Psoas muscle (tissue), 8 donors: ENCODE measurements at regions of chr14 and their contacts with region 1.

Region 1: GRCh38 chr14:30982533-30982932 is 42.9 kb upstream of the AP4S1 start:
- DNase-seq: no peak
- ATAC-seq: no peak
- H3K4me3 ChIP-seq: no peak overlapping the region
- H3K27ac ChIP-seq: peak overlapping the region; percentile 15
- H3K4me1 ChIP-seq: peaks cover 14% of the 10 kb centered on the region
- H3K27me3 ChIP-seq: no peaks in the 10 kb centered on the region
- CTCF ChIP-seq: no peak

Region 2: DNA sequence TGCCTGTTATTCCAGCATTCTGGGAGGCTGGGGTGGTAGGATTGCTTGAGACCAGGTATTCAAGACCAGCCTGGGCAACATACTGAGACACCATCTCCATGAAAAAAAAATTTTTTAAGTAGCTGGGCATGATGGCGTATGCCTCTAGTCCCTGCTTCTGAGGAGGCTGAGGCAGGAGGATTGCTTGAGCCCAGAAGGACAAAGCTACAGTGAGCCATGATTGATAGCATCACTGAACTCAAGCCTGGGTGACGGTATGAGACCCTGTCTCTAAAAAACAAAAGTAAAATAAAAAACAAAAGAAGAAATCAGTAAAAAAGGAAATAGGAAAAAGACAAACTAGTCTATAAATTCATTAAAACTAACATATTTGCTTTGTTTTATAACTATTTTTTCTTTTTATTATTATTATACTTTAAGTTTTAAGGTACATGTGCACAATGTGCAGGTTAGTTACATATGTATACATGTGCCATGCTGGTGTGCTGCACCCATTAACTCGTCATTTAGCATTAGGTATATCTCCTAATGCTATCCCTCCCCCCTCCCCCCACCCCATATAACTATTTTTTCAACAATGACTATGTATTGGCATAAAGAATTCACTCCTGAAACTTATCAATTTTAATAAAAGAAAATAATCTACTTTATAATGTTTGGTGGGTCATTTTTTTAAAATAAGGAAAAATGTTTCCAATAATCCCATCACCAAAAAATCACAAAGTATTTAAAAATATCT is 27.5 kb after region 1 on chr14:
- intact Hi-C with region 1: no loop called
- DNase-seq: no peak
- ATAC-seq: no peak
- H3K4me3 ChIP-seq: no peak overlapping the region
- H3K27ac ChIP-seq: no peak overlapping the region
- H3K4me1 ChIP-seq: peaks cover 21% of the 10 kb centered on the region
- H3K27me3 ChIP-seq: no peaks in the 10 kb centered on the region
- CTCF ChIP-seq: no peak

Region 3: DNA sequence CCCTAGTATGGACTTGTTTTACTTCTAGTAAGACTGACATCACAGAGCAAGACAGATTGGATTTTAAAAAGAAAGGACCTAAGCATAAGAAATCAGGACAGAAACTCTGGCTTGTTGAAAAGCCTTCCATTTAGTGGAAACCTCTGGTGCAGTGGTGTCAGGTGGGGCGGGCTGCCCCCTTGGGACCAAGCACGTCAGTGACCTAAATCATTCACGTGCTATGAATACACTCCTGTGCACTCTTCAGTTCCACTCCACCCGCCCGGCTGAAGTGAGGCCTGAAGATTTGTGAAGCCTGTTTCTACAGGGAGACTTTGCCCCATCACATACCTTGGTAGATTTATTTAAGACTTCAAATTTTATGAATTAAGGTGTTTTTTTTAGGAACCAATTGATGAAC is 101.9 kb after region 1 on chr14:
- intact Hi-C with region 1: loop called (anchors 2 to 5 kb)
- DNase-seq: peak in 1 of 2 donors; percentile 70
- ATAC-seq: peak in 3 of 4 donors; percentile 40 to 76 (median 59)
- H3K4me3 ChIP-seq: no peak overlapping the region
- H3K27ac ChIP-seq: peak overlapping the region; percentile 54
- H3K4me1 ChIP-seq: no peaks in the 10 kb centered on the region
- H3K27me3 ChIP-seq: no peaks in the 10 kb centered on the region
- CTCF ChIP-seq: no peak